ENCODE measurements at regions of chr18 and their contacts with region 1.

Region 1: DNA sequence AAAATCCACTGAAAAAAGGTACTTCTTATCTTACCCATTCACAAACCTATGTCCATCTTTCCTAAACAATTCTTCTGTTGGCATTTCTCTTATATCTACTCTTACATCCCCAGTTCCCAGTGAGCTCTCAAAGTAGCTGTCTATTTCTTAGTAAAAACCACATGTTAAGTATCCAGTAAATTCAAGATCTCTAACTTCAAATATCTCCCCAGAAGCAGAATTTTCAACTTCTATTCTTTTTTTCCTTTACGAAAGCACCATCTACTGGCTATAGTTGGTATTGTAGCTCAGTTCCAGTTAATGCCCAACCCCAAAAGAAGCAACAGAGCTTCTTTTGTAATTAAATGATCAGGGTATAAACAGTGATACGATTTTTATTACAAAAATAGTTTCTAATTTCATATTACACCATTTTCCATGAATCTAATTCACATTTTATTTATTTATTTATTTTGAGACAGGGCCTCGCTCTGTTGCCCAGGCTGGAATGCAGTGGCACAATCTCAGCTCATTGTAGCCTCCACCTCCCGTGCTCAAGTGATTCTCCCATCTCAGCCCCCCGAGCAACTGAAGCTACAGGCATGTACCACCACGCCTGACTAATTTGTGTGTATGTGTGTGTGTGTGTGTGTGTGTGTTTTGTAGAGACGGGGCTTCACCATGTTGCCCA is 28.5 kb downstream of the HRH4 start:
- DNase-seq: no peak
- H3K4me3 ChIP-seq: no peak overlapping the region
- H3K27ac ChIP-seq: no peak overlapping the region
- H3K4me1 ChIP-seq: no peaks in the 10 kb centered on the region
- H3K27me3 ChIP-seq: no peaks in the 10 kb centered on the region
- CTCF ChIP-seq: peak in 2 of 3 experiments; percentile 40 to 50; a peak in 2 of 4 replicates
- EP300 ChIP-seq: no peak
- POLR2A ChIP-seq: no peak
- RAD21 ChIP-seq: peak; percentile 67

Region 2: GRCh38 chr18:24362758-24363157 is 126.2 kb before region 1 on chr18:
- CTCF ChIA-PET with region 1: interaction called, 101 read pairs
- POLR2A ChIA-PET with region 1: no interaction called
- DNase-seq: peak in 1 of 2 experiments; percentile 34
- H3K4me3 ChIP-seq: no peak overlapping the region
- H3K27ac ChIP-seq: no peak overlapping the region
- H3K4me1 ChIP-seq: 0 out of 7 replicates have a peak, but pooled peaks cover 0 to 2% (median 0%) of the 10 kb centered on the region in 4 experiments
- H3K27me3 ChIP-seq: no peaks in the 10 kb centered on the region
- CTCF ChIP-seq: no peak
- EP300 ChIP-seq: no peak
- POLR2A ChIP-seq: no peak
- RAD21 ChIP-seq: no peak

Region 3: DNA sequence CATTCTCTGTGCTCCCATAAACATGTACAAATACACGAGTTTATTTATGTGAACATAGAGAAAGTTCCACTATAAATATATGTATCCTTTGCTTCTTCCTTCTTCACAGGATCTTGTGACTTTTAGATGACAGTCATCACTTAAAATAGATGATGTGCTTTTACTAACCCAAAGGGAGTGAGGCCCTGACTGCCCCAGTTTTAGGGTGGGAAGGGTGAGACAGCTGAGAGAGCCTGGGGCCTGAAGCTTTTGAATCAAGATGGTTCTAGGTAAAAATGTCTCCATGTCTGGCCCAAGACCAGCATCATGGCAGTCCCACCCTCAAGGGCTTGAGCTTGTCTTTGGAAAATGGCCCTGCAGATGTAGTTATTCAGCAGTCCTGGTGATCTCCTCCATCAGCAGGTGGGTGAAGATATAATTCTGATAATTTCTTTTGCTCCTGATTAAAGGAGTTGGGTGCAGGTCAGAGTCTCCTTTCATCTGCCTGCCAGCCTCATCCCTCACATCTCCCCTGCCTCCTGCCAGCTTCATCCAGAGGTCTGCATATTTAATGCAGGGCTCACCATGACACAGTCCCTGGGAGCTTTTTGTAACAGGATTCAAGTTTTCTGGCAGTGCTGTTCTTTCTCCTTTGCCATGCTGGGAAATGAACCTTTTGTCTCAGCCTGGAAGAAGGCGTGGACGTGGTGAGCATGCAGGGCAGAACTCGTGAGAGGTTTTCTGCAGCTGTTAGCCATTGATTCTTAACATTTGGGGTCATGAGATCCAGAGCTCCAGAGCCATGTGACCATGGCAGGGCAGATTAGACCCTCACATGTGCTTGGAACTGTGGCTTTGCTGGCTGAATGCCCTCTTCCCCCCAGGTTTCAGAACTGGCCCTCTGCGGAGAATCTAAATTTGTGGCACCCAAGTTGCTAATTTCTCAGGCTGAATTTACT is 25.9 kb before region 1 on chr18:
- CTCF ChIA-PET with region 1: interaction called, 42 read pairs
- POLR2A ChIA-PET with region 1: no interaction called
- DNase-seq: no peak
- H3K4me3 ChIP-seq: no peak overlapping the region
- H3K27ac ChIP-seq: no peak overlapping the region
- H3K4me1 ChIP-seq: 0 out of 7 replicates have a peak, but pooled peaks cover 0 to 3% (median 0%) of the 10 kb centered on the region in 4 experiments
- H3K27me3 ChIP-seq: no peaks in the 10 kb centered on the region
- CTCF ChIP-seq: no peak
- EP300 ChIP-seq: no peak
- POLR2A ChIP-seq: no peak
- RAD21 ChIP-seq: no peak

Region 4: GRCh38 chr18:24538414-24539264 is 49.7 kb after region 1 on chr18:
- CTCF ChIA-PET with region 1: interaction called, 11 read pairs
- POLR2A ChIA-PET with region 1: no interaction called
- DNase-seq: no peak
- H3K4me3 ChIP-seq: no peak overlapping the region
- H3K27ac ChIP-seq: no peak overlapping the region
- H3K4me1 ChIP-seq: no peaks in the 10 kb centered on the region
- H3K27me3 ChIP-seq: no peaks in the 10 kb centered on the region
- CTCF ChIP-seq: no peak
- EP300 ChIP-seq: no peak
- POLR2A ChIP-seq: no peak
- RAD21 ChIP-seq: no peak

Region 5: DNA sequence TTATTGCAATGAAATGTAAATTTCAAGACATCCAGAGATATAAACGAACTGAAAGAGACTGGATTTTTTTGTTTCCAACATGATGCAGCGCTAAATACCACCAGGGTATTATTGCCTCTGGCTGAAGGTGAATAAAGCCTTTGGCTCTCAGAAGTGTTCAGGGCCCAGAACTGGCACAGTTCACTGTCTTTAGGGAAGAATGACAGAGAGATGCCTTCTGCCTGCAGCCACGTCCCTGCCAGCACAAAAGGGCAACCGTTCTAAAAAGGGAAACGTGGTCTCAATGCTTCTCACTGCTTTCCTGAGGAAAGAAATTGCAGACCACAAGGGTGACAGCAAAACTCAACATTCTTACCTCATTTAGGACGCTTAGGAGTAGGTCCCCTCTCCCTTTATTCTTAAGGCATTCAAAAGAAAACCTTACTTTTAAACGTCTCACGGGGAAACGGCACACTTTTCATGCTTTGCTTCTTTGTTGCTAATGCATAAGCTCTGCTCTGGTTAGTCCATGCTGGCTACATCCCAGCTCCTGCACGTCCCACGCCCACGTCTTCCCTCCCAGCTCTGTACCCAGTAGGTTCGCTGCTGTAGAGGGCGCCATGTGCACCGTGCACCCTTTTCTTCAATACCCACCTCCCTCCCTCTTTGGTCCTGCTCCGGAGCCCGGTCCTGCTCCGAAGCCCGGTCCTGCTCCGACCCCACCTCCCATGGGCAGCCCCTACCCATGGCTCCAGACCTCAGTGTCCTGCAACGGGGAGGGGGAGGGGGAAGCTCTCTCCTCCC is 142.5 kb after region 1 on chr18:
- CTCF ChIA-PET with region 1: interaction called, 12 read pairs
- POLR2A ChIA-PET with region 1: no interaction called
- DNase-seq: peak in 1 of 2 experiments; percentile 55
- H3K4me3 ChIP-seq: 0 out of 8 replicates have a peak overlapping the region, but pooled peaks of 1 of the 4 experiments have one; percentile 0
- H3K27ac ChIP-seq: no peak overlapping the region
- H3K4me1 ChIP-seq: peaks cover 0 to 3% (median 1%) of the 10 kb centered on the region in 4 experiments; a peak in 1 of 7 replicates
- H3K27me3 ChIP-seq: no peaks in the 10 kb centered on the region; a peak in 1 of 7 replicates
- CTCF ChIP-seq: peak in 2 of 3 experiments; percentile 47 to 71; a peak in 2 of 4 replicates
- EP300 ChIP-seq: no peak
- POLR2A ChIP-seq: no peak
- RAD21 ChIP-seq: peak in 1 of 2 experiments; percentile 16; a peak in 1 of 4 replicates

Region 6: GRCh38 chr18:24731981-24732380 is 243.0 kb after region 1 on chr18:
- CTCF ChIA-PET with region 1: interaction called, 17 read pairs
- POLR2A ChIA-PET with region 1: no interaction called
- DNase-seq: no peak
- H3K4me3 ChIP-seq: no peak overlapping the region
- H3K27ac ChIP-seq: no peak overlapping the region
- H3K4me1 ChIP-seq: no peaks in the 10 kb centered on the region; a peak in 1 of 7 replicates
- H3K27me3 ChIP-seq: no peaks in the 10 kb centered on the region
- CTCF ChIP-seq: no peak
- EP300 ChIP-seq: no peak
- POLR2A ChIP-seq: no peak
- RAD21 ChIP-seq: no peak